ENCODE measurements at regions of chr6 and their contacts with region 1.

Region 1: GRCh38 chr6:31087494-31088089 is 24.8 kb downstream of the C6orf15 start:
- DNase-seq: peak; percentile 64 to 94 (median 83)
- ATAC-seq: peak; percentile 97 to 99 (median 99)
- H3K4me3 ChIP-seq: no peak overlapping the region
- H3K4me3 Mint-ChIP-seq: no peak overlapping the region
- H3K27ac ChIP-seq: no peak overlapping the region
- H3K27ac Mint-ChIP-seq: peak overlapping the region in 1 of 2 donors; percentile 29
- H3K4me1 ChIP-seq: peaks cover 0 to 4% of the 10 kb centered on the region in 2 experiments
- H3K4me1 Mint-ChIP-seq: peaks cover 7 to 19% (median 9%) of the 10 kb centered on the region in 3 donors
- H3K27me3 ChIP-seq: peaks cover 0 to 4% of the 10 kb centered on the region in 2 experiments
- H3K27me3 Mint-ChIP-seq: no peaks in the 10 kb centered on the region

Region 2: GRCh38 chr6:30821862-30822782 is 265.5 kb before region 1 on chr6:
- CTCF ChIA-PET with region 1: interaction called, 5 to 23 read pairs
- POLR2A ChIA-PET with region 1: no interaction called
- DNase-seq: peak in 2 of 35 experiments; percentile 6 to 67
- ATAC-seq: peak in 1 of 4 experiments; percentile 38
- H3K4me3 ChIP-seq: no peak overlapping the region
- H3K4me3 Mint-ChIP-seq: no peak overlapping the region
- H3K27ac ChIP-seq: peak overlapping the region; percentile 5
- H3K27ac Mint-ChIP-seq: peak overlapping the region; percentile 79 to 83
- H3K4me1 ChIP-seq: peaks cover 4 to 13% of the 10 kb centered on the region in 2 experiments
- H3K4me1 Mint-ChIP-seq: peaks cover 50 to 80% (median 65%) of the 10 kb centered on the region in 3 donors
- H3K27me3 ChIP-seq: no peaks in the 10 kb centered on the region
- H3K27me3 Mint-ChIP-seq: no peaks in the 10 kb centered on the region

Region 3: DNA sequence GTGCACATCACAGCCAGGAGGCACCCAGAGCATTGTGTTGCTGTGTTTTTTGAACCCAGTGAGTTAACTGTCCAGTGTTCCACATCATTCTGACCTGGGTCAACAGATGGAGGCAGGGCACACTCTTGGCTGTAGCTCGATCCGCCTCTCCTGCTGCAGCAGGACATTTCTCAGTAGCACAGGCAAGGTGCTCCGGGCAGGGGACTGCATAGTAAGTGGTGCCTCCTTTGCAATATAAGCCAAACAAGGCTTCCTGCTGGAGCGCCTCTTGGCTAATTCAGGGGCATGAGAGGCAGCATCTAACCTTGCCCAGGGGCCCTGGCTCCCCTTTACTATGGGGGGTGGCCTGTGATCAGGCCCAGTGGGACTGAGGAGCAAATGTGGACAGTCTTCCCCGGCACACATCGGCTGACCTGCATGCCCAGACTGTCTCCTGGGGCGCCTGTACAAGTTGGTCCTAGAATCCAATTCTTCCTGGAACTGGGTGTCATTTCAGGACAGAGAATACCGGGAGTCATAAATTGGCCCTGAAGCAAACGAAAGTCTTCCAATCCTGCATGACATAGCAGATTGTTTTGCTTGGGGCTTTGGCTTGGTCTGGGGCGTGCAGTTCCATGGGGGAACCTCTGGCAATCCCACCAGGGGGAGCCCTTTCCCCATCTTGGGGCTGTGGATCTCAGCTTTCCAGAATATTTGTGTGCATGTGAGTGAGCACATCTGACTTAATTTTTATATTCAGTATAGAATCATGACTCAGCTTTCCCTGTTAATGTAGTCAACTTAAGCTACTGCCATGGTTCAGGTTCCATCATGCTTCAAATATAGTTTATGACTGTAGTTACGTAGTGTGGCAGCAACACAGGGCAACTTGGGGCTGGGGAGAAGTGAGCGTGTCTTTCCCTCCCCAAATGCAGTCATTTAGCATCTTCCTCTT is 259.3 kb before region 1 on chr6:
- CTCF ChIA-PET with region 1: interaction called, 5 to 25 read pairs
- POLR2A ChIA-PET with region 1: no interaction called
- DNase-seq: peak; percentile 40 to 86 (median 73)
- ATAC-seq: peak; percentile 72 to 84 (median 74)
- H3K4me3 ChIP-seq: peak overlapping the region; percentile 70 to 71
- H3K4me3 Mint-ChIP-seq: peak overlapping the region; percentile 86 to 93 (median 92)
- H3K27ac ChIP-seq: peak overlapping the region; percentile 27
- H3K27ac Mint-ChIP-seq: peak overlapping the region; percentile 97 to 99
- H3K4me1 ChIP-seq: peaks cover 32 to 54% of the 10 kb centered on the region in 2 experiments
- H3K4me1 Mint-ChIP-seq: peaks cover 74 to 91% (median 84%) of the 10 kb centered on the region in 3 donors
- H3K27me3 ChIP-seq: no peaks in the 10 kb centered on the region
- H3K27me3 Mint-ChIP-seq: no peaks in the 10 kb centered on the region

Region 4: DNA sequence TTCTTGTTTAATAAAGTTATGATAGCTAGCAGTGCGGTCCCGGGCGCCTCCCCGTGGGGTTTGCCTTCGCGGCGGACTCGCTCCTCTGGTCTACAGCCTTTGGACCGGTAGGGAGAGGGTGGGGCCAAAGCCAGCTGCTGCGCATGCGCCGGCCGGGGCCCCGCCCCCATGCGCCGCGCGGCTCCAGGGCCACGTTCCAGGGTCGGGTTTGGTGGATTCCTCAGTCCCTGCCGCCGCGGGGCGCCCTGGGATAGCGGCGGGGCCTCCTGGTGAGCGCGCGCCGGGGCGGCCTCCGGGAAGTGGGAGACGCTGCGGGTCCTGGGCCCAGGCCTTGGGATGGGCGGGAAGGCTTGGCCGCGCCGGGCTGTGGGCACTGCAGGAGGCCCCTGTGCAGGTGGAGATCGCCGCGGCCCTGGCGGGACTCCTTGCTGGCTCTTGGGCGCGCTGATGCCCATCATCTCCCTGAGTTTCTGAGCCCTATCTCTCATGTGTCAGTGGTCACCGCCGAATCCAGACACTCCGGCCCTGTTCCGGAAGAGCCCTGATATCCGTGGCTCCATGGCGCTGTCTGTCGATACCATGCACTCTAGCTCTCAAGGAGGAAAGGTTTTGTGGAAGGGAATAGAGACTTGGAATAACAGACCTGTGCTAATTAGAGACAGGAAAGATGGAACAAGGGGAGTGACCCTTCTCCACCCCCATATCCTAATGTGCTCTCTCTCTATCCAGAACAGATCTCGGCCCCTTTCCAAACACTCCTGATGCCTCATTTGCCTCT is 173.3 kb before region 1 on chr6 and contains the start of gene VARS2:
- CTCF ChIA-PET with region 1: interaction called, 4 to 10 read pairs
- POLR2A ChIA-PET with region 1: no interaction called
- DNase-seq: peak; percentile 54 to 92 (median 75)
- ATAC-seq: peak; percentile 94 to 97 (median 96)
- H3K4me3 ChIP-seq: peak within 1 kb of the TSS; percentile 73 to 85
- H3K4me3 Mint-ChIP-seq: peak within 1 kb of the TSS; percentile 78 to 96 (median 85)
- H3K27ac ChIP-seq: no peak within 1 kb of the TSS
- H3K27ac Mint-ChIP-seq: peak within 1 kb of the TSS; percentile 85 to 89
- H3K4me1 ChIP-seq: peaks cover 4 to 26% of the 10 kb centered on the region in 2 experiments
- H3K4me1 Mint-ChIP-seq: peaks cover 31 to 38% (median 37%) of the 10 kb centered on the region in 3 donors
- H3K27me3 ChIP-seq: no peaks in the 10 kb centered on the region
- H3K27me3 Mint-ChIP-seq: no peaks in the 10 kb centered on the region
- total RNA-seq, gene VARS2: 25.1 to 55.2 (median 40.9) TPM

Region 5: GRCh38 chr6:30942338-30943060 is 145.1 kb before region 1 on chr6:
- CTCF ChIA-PET with region 1: interaction called in 1 of 2 experiments, 10 read pairs
- POLR2A ChIA-PET with region 1: no interaction called
- DNase-seq: peak in 2 of 35 experiments; percentile 16 to 18
- ATAC-seq: no peak
- H3K4me3 ChIP-seq: no peak overlapping the region
- H3K4me3 Mint-ChIP-seq: no peak overlapping the region
- H3K27ac ChIP-seq: no peak overlapping the region
- H3K27ac Mint-ChIP-seq: peak overlapping the region in 1 of 2 donors; percentile 13
- H3K4me1 ChIP-seq: no peaks in the 10 kb centered on the region
- H3K4me1 Mint-ChIP-seq: peaks cover 2 to 9% (median 4%) of the 10 kb centered on the region in 3 donors
- H3K27me3 ChIP-seq: peaks cover 0 to 75% of the 10 kb centered on the region in 2 experiments
- H3K27me3 Mint-ChIP-seq: peaks cover 56 to 70% of the 10 kb centered on the region in 2 donors

Region 6: DNA sequence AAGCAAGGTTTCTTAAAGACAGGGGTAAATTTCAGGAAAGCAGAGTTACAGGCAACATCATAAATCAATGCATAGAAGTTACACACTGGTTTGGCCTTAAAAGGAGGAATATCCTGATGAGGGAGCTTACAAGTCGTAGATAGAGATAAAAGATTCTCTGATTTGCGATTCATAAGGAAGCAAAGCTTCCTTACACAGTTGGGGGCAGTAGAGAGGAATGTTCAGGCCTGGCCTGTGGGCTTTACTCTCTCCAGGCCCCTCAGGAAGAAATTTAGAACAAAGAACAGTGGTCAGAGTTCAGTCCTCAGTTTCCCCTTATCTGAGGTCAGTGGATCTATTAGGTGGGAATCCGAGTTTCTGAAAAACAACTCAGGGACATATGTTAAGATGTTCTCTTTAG is 165.0 kb after region 1 on chr6:
- CTCF ChIA-PET with region 1: no interaction called
- POLR2A ChIA-PET with region 1: no interaction called
- DNase-seq: no peak
- ATAC-seq: peak; percentile 37 to 68 (median 52)
- H3K4me3 ChIP-seq: no peak overlapping the region
- H3K4me3 Mint-ChIP-seq: no peak overlapping the region
- H3K27ac ChIP-seq: no peak overlapping the region
- H3K27ac Mint-ChIP-seq: no peak overlapping the region
- H3K4me1 ChIP-seq: no peaks in the 10 kb centered on the region
- H3K4me1 Mint-ChIP-seq: peaks cover 0 to 10% (median 1%) of the 10 kb centered on the region in 3 donors
- H3K27me3 ChIP-seq: no peaks in the 10 kb centered on the region
- H3K27me3 Mint-ChIP-seq: peaks cover 0 to 8% of the 10 kb centered on the region in 2 donors

Measured in T-cell (primary cell).